PC-9 (cell line): ENCODE measurements at regions of chr3 and their contacts with region 1.

Region 1: DNA sequence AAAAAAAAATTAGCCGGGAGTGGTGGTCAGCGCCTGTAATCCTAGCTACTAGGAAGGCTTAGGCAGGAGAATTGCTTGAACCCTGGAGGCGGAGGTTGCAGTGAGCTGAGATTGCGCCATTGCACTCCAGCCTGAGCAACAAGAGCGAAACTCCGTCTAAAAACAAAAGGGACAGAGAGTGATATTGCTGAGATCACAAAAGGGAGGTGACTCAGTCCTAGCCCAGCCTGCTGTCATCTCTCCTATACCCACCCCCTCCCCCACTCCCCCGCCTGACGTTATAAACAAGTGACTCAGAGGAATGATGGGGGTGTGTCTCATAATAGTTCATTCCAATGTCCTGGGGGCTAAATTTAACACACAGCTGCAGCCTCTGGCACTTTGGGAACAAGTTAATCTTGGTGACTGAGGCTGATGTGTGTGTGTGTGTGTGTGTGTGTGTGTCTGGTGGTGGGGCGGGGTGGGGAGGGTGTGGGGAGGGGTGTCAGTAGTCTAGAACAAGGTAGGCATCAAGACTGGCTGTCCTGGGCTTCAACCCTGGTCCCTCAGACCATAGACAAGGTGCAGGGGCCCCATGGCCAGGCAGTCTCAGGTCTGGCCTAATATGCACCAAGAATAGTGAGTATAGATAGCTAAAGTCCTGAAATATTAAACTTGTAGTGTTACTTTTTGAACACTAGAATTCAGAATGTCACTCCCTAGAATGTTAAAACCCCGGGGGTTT is 1.3 kb upstream of the KLHL40 start:
- DNase-seq: peak; percentile 56 to 88
- H3K4me3 ChIP-seq: 0 out of 2 replicates have a peak overlapping the region, but pooled peaks have one; percentile 17
- H3K27ac ChIP-seq: peak overlapping the region; percentile 41; the same call in 1 of the 2 replicates
- H3K4me1 ChIP-seq: peaks cover 21% of the 10 kb centered on the region
- H3K27me3 ChIP-seq: no peaks in the 10 kb centered on the region
- CTCF ChIP-seq: no peak

Region 2: GRCh38 chr3:42495393-42495792 is 188.6 kb before region 1 on chr3:
- CTCF ChIA-PET with region 1: no interaction called
- POLR2A ChIA-PET with region 1: no interaction called
- intact Hi-C with region 1: no loop called
- DNase-seq: no peak
- H3K4me3 ChIP-seq: no peak overlapping the region
- H3K27ac ChIP-seq: no peak overlapping the region
- H3K4me1 ChIP-seq: peaks cover 57% of the 10 kb centered on the region
- H3K27me3 ChIP-seq: no peaks in the 10 kb centered on the region
- CTCF ChIP-seq: no peak

Region 3: GRCh38 chr3:42660893-42661292 is 23.1 kb before region 1 on chr3:
- CTCF ChIA-PET with region 1: no interaction called
- POLR2A ChIA-PET with region 1: no interaction called
- intact Hi-C with region 1: no loop called
- DNase-seq: no peak
- H3K4me3 ChIP-seq: no peak overlapping the region
- H3K27ac ChIP-seq: no peak overlapping the region
- H3K4me1 ChIP-seq: no peaks in the 10 kb centered on the region
- H3K27me3 ChIP-seq: no peaks in the 10 kb centered on the region
- CTCF ChIP-seq: no peak

Region 4: DNA sequence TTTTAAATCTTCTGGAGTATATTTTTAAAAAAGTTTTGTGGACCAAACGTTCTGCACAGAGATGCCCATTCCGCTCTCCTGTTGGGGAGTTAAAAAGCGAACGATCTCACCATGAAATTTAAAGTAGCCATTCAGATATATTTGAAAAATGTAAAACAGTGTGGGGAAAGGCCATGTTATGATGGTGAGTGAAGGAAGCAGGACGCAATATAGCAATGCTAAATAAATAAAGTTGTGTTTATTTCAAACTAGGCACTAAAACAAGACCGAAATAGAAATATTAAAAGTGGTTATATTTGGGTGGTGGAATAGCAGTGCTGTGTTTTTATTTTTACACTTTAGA is 89.3 kb after region 1 on chr3:
- CTCF ChIA-PET with region 1: interaction called, 10 read pairs
- POLR2A ChIA-PET with region 1: no interaction called
- intact Hi-C with region 1: no loop called
- DNase-seq: no peak
- H3K4me3 ChIP-seq: no peak overlapping the region
- H3K27ac ChIP-seq: no peak overlapping the region
- H3K4me1 ChIP-seq: no peaks in the 10 kb centered on the region
- H3K27me3 ChIP-seq: no peaks in the 10 kb centered on the region
- CTCF ChIP-seq: no peak

Region 5: DNA sequence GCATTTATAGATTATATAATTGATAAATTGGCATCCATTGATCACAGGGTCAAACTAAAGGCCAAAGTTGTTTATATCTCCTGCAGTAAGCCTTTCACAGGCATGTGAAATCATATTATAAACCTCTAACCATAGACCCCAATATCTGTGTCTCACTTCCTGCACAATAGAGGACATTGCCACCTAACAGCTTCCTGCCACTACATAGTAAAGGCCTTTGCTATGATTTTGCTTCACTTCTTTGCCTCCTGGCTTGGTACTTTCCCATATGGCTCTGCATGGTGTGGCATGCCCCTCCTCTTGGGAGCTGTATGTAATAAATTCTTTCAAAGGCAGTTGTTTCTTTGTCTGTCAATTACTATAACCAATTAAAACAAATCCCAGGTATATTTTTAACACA is 242.3 kb after region 1 on chr3:
- CTCF ChIA-PET with region 1: no interaction called
- POLR2A ChIA-PET with region 1: no interaction called
- intact Hi-C with region 1: no loop called
- DNase-seq: no peak
- H3K4me3 ChIP-seq: no peak overlapping the region
- H3K27ac ChIP-seq: no peak overlapping the region
- H3K4me1 ChIP-seq: no peaks in the 10 kb centered on the region
- H3K27me3 ChIP-seq: no peaks in the 10 kb centered on the region
- CTCF ChIP-seq: no peak

Region 6: DNA sequence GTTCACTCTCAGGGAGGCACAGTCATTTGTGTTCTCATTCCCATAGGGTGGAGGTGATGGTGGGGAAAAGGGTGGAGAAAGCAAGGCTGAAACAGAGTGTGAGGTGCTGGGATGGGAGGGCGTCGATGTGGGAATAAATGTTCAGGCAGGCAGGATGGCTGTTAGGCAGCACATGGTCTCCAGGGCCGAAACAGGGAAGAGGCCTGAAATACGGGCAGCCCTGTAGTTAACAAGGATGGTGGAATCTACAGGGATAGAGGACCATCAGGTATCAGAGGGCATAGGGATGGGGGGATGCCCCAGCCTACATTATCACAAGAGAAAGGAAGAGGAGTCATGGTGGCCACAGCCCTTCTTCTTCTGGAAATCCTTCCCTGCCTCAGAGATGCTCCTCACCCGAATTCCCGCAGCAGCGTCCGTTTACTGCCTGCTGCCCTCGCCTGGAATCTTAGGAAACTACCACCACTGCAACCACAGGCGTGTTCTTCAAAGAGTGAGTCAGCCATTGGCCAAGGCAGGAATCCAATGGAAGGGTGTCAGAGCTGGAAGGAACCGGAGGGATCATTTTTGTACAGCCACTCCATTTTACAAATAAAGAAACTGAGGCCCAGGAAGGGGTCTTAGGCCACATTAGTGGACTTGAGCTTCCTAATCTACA is 471.6 kb after region 1 on chr3:
- CTCF ChIA-PET with region 1: no interaction called
- POLR2A ChIA-PET with region 1: no interaction called
- intact Hi-C with region 1: no loop called
- DNase-seq: peak; percentile 47 to 60
- H3K4me3 ChIP-seq: no peak overlapping the region
- H3K27ac ChIP-seq: no peak overlapping the region
- H3K4me1 ChIP-seq: no peaks in the 10 kb centered on the region
- H3K27me3 ChIP-seq: no peaks in the 10 kb centered on the region
- CTCF ChIP-seq: peak; percentile 70